ENCODE measurements at regions of chr20 and their contacts with region 1.

Region 1: DNA sequence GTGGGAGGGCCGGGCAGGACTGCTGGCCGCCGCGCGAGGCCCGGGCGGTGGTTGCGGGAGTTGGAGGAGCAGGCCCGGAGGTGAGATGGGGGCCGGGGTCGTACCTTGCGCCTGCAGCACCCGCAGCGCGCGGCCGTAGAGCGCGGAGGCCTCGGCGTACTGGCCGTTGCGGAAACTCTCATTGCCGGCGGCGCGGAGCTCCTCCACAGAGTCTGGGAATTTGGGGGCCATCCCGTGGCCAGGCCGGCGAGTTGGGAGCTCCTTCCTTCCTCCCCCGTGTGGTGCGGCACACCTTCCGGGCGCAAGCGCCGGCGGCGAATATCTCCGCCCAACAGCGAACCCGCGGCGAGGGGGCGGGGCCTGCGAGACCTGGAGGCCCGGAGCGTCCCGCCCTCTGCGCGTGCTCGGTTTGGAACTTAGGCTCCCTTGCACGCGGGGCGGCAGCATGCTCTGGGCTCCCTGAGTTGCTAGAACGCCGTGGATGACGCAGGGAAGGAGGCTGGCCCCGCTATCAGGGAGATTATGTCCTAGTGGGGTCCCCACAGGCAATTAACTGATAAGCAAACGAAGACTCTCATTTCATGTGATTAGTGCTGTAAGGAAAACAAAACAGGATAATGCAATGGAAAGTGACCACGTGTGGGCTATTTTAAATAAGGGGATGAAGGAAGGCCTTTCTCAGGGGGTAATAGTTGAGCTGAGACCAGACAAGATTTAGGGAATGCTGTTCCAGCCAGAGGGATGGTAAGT is at the start of gene TOMM34:
- DNase-seq: peak; percentile 84 to 97 (median 95)
- ATAC-seq: peak; percentile 94
- H3K4me3 ChIP-seq: peak within 1 kb of the TSS; percentile 70 to 80
- H3K4me3 Mint-ChIP-seq: peak within 1 kb of the TSS; percentile 96
- H3K27ac ChIP-seq: peak within 1 kb of the TSS; percentile 58 to 60
- H3K27ac Mint-ChIP-seq: peak within 1 kb of the TSS; percentile 96
- H3K4me1 ChIP-seq: peaks cover 32% of the 10 kb centered on the region
- H3K4me1 Mint-ChIP-seq: peaks cover 56% of the 10 kb centered on the region
- H3K27me3 ChIP-seq: no peaks in the 10 kb centered on the region
- H3K27me3 Mint-ChIP-seq: no peaks in the 10 kb centered on the region
- CTCF ChIP-seq: no peak
- total RNA-seq, gene TOMM34: 11.9 to 12.4 TPM

Region 2: GRCh38 chr20:44979090-44979621 is 18.9 kb after region 1 on chr20:
- CTCF ChIA-PET with region 1: interaction called, 29 read pairs
- POLR2A ChIA-PET with region 1: interaction called, 60 read pairs
- intact Hi-C with region 1: loop called in 1 of 2 experiments (anchors 2 kb)
- DNase-seq: peak in 8 of 9 experiments; percentile 54 to 95 (median 72)
- ATAC-seq: peak; percentile 83
- H3K4me3 ChIP-seq: peak overlapping the region; percentile 4 to 36
- H3K4me3 Mint-ChIP-seq: peak overlapping the region; percentile 68
- H3K27ac ChIP-seq: peak overlapping the region; percentile 87 to 95
- H3K27ac Mint-ChIP-seq: peak overlapping the region; percentile 94
- H3K4me1 ChIP-seq: peaks cover 70% of the 10 kb centered on the region
- H3K4me1 Mint-ChIP-seq: peaks cover 83% of the 10 kb centered on the region
- H3K27me3 ChIP-seq: no peaks in the 10 kb centered on the region
- H3K27me3 Mint-ChIP-seq: no peaks in the 10 kb centered on the region
- CTCF ChIP-seq: no peak

Region 3: DNA sequence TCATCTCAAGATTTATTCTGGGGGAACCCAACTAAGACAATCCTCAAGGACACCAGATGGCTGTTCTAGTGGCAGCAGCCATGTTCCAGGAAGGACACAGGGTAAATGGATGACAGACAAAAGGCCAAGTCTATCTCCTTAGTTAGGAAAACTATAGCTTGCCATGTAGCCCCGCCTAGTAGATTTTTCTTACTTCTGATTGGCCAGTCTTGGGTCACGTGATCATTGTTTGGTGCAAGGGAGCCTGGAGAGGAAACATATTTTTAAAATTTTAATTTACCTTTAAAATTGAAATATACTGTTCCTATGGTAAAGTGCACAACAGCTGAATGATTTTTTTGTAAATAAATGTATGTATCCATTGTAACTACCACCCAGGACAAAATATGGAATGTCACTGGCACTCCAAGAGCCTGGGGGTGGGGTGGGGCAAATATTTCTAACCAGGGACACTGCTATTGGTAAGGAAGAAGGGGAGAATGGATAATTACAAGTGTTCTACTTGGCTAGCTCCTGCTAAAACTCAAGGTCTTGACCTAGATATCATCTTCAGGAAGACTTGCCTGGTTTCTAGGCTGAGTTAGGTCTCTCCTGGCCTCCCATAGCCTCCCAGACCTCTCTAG is 145.2 kb after region 1 on chr20:
- CTCF ChIA-PET with region 1: no interaction called
- POLR2A ChIA-PET with region 1: no interaction called
- intact Hi-C with region 1: no loop called
- DNase-seq: no peak
- ATAC-seq: no peak
- H3K4me3 ChIP-seq: no peak overlapping the region
- H3K4me3 Mint-ChIP-seq: no peak overlapping the region
- H3K27ac ChIP-seq: no peak overlapping the region
- H3K27ac Mint-ChIP-seq: no peak overlapping the region
- H3K4me1 ChIP-seq: no peaks in the 10 kb centered on the region
- H3K4me1 Mint-ChIP-seq: peaks cover 4% of the 10 kb centered on the region
- H3K27me3 ChIP-seq: peaks cover 0 to 5% of the 10 kb centered on the region in 2 experiments
- H3K27me3 Mint-ChIP-seq: peaks cover 25% of the 10 kb centered on the region
- CTCF ChIP-seq: no peak

Measured in CD8-positive, alpha-beta T cell (primary cell).